Aorta (tissue), 5 donors: ENCODE measurements at regions of chr1 and their contacts with region 1.

Region 1: DNA sequence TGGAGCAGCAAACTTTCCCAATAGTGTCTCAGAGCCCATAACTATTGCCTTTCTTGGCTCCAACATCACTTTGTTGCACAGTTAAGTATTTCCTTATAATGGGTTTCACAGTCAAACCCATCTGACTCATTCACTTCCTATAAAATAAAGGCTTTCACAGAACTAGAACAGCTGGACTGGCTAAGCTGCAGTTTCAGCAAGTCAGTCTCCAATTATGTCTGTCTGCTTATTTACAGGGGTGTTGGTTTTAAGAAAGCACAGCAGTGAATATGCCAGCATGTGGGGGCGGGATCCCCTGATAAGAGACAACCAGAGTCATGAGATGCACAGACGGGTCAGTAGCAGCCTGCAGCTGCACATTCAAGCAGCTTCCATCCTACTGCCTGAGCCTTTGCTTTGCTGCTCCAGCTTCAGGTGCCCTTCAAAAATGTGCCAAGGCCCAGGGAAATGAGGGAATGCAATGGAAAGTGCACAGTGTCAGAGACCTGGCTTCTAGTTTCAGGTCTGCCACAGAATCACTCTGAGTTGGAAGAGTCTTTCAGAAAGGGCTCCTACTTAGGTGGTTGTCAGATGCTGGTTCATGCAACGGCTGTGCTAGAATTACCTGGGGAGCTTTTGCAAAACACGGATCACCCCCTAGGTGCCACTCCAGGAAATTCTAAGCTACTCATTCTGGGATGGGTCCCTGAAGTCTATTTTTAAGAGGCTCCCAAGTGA is 24.8 kb downstream of the RNF19B start:
- DNase-seq: peak in 1 of 2 donors; percentile 80
- ATAC-seq: peak; percentile 82
- H3K4me3 ChIP-seq: no peak overlapping the region
- H3K27ac ChIP-seq: no peak overlapping the region
- H3K4me1 ChIP-seq: peaks cover 0 to 1% of the 10 kb centered on the region in 2 donors
- H3K27me3 ChIP-seq: no peaks in the 10 kb centered on the region

Region 2: GRCh38 chr1:32900951-32901822 is 38.6 kb before region 1 on chr1 and contains the start of gene TMEM54:
- intact Hi-C with region 1: no loop called
- DNase-seq: peak; percentile 73 to 87
- ATAC-seq: peak; percentile 76
- H3K4me3 ChIP-seq: peak within 1 kb of the TSS; percentile 58 to 66
- H3K27ac ChIP-seq: no peak within 1 kb of the TSS
- H3K4me1 ChIP-seq: no peaks in the 10 kb centered on the region
- H3K27me3 ChIP-seq: no peaks in the 10 kb centered on the region
- total RNA-seq, gene TMEM54: 21.1 to 23.8 TPM

Region 3: GRCh38 chr1:33007190-33008050 is 67.6 kb after region 1 on chr1:
- intact Hi-C with region 1: loop called (anchors 2 to 5 kb)
- DNase-seq: peak in 1 of 2 donors; percentile 67
- ATAC-seq: peak; percentile 76
- H3K4me3 ChIP-seq: no peak overlapping the region
- H3K27ac ChIP-seq: no peak overlapping the region
- H3K4me1 ChIP-seq: peaks cover 0 to 8% of the 10 kb centered on the region in 2 donors
- H3K27me3 ChIP-seq: no peaks in the 10 kb centered on the region

Region 4: GRCh38 chr1:33036526-33037503 is 97.0 kb after region 1 on chr1 and contains the start of gene AK2:
- intact Hi-C with region 1: loop called in 1 of 2 experiments (anchors 10 kb)
- DNase-seq: peak; percentile 98
- ATAC-seq: peak; percentile 100
- H3K4me3 ChIP-seq: peak within 1 kb of the TSS; percentile 79 to 91
- H3K27ac ChIP-seq: no peak within 1 kb of the TSS
- H3K4me1 ChIP-seq: peaks cover 0 to 2% of the 10 kb centered on the region in 2 donors
- H3K27me3 ChIP-seq: no peaks in the 10 kb centered on the region
- total RNA-seq, gene AK2: 87.4 to 95.6 TPM

Region 5: GRCh38 chr1:33080885-33081553 is 141.2 kb after region 1 on chr1 and contains the start of gene AZIN2:
- intact Hi-C with region 1: loop called in 1 of 2 experiments (anchors 10 kb)
- DNase-seq: peak; percentile 98 to 100
- ATAC-seq: peak; percentile 98
- H3K4me3 ChIP-seq: peak within 1 kb of the TSS; percentile 46 to 51
- H3K27ac ChIP-seq: no peak within 1 kb of the TSS
- H3K4me1 ChIP-seq: no peaks in the 10 kb centered on the region
- H3K27me3 ChIP-seq: no peaks in the 10 kb centered on the region
- total RNA-seq, gene AZIN2: 3.9 to 14.4 TPM

Region 6: GRCh38 chr1:33094971-33095604 is 155.3 kb after region 1 on chr1:
- intact Hi-C with region 1: no loop called
- DNase-seq: no peak
- ATAC-seq: peak; percentile 45
- H3K4me3 ChIP-seq: no peak overlapping the region
- H3K27ac ChIP-seq: no peak overlapping the region
- H3K4me1 ChIP-seq: no peaks in the 10 kb centered on the region
- H3K27me3 ChIP-seq: no peaks in the 10 kb centered on the region